GM12878 (cell line): ENCODE measurements at regions of chr9 and their contacts with region 1.

Region 1: GRCh38 chr9:90838100-90838499 is 36.5 kb downstream of the SYK start:
- DNase-seq: no peak
- ATAC-seq: peak; percentile 48
- H3K4me3 ChIP-seq: no peak overlapping the region
- H3K27ac ChIP-seq: no peak overlapping the region
- H3K4me1 ChIP-seq: peaks cover 25% of the 10 kb centered on the region
- H3K27me3 ChIP-seq: no peaks in the 10 kb centered on the region
- CTCF ChIP-seq: peak in 2 of 3 experiments; percentile 8; a peak in 1 of 6 replicates
- EP300 ChIP-seq: no peak
- POLR2A ChIP-seq: no peak
- RAD21 ChIP-seq: peak; percentile 40; the same call in 1 of the 2 replicates

Region 2: GRCh38 chr9:90801583-90802289 is 36.4 kb before region 1 on chr9 and contains the start of gene SYK:
- CTCF ChIA-PET with region 1: no interaction called
- POLR2A ChIA-PET with region 1: no interaction called
- RAD21 ChIA-PET with region 1: interaction called, 3 read pairs
- SMC1A ChIA-PET with region 1: interaction called, 10 read pairs
- in situ Hi-C with region 1: no loop called
- intact Hi-C with region 1: loop called (anchors 5 kb)
- DNase-seq: no peak
- ATAC-seq: peak; percentile 72
- H3K4me3 ChIP-seq: peak within 1 kb of the TSS; percentile 81
- H3K27ac ChIP-seq: peak within 1 kb of the TSS; percentile 83
- H3K4me1 ChIP-seq: peaks cover 25% of the 10 kb centered on the region
- H3K27me3 ChIP-seq: no peaks in the 10 kb centered on the region
- CTCF ChIP-seq: no peak
- EP300 ChIP-seq: no peak
- POLR2A ChIP-seq: peak; percentile 66; the same call in 1 of the 2 replicates
- RAD21 ChIP-seq: no peak
- polyA plus RNA-seq, gene SYK: 23.1 to 24.8 TPM

Region 3: DNA sequence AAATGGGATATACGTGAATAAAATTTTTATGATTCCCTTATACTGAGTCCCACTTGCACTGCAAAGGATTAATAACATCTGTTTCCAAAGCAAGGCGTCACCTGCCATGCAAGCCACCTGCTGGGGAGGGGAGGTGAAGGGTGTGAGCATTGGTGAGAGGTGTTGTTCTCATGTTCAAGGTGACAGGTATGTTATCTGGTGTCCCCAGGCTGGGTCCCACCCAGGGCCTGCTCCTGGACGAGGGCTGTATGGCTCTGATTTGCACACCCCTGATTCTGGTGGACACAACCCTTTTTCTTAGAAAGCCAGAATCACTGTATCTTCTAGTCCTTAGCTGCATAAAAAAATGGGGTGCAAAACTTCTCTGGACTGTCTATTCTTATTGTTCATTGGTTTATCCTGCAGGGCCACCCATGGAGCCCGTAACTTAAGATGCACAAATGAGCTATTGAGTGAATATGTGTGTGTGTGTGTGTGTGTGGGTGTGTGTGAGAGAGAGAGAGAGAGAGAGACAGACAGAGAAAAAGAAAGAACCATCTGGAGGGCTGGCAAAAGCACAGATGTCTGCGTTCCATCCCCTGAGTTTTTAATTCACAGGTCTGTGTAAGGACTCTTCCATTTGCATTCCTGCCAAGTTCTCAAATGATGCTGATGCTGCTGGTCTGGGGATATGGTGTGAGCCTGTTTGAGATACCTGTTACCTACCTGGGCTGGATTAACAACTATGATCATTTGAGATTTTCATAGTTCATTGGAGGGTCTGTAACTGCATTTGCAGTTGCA is 17.3 kb after region 1 on chr9:
- CTCF ChIA-PET with region 1: no interaction called
- POLR2A ChIA-PET with region 1: no interaction called
- RAD21 ChIA-PET with region 1: no interaction called
- SMC1A ChIA-PET with region 1: no interaction called
- in situ Hi-C with region 1: no loop called
- intact Hi-C with region 1: no loop called
- DNase-seq: no peak
- ATAC-seq: no peak
- H3K4me3 ChIP-seq: no peak overlapping the region
- H3K27ac ChIP-seq: no peak overlapping the region
- H3K4me1 ChIP-seq: no peaks in the 10 kb centered on the region
- H3K27me3 ChIP-seq: no peaks in the 10 kb centered on the region
- CTCF ChIP-seq: no peak
- EP300 ChIP-seq: no peak
- POLR2A ChIP-seq: no peak
- RAD21 ChIP-seq: no peak

Region 4: DNA sequence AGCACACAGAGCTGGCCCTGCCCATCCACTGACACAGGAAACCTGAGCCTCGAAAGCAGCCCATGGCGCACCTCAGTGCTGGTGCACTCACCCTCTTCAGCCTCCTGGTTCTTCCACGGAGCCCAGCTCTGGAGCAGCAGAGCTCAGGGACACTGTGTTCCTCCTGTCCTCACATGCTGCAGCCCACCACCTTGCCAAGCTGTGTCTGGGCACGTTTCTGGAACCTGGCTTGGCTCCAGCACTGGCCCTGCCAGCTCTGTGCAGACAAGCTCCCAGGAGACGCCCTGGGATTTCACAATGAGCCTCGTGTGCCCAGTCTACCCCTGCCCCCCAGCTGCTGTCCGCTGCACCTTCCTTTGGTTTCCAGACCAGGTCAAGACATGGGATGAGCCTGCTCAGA is 83.0 kb after region 1 on chr9:
- CTCF ChIA-PET with region 1: no interaction called
- POLR2A ChIA-PET with region 1: no interaction called
- RAD21 ChIA-PET with region 1: no interaction called
- SMC1A ChIA-PET with region 1: no interaction called
- in situ Hi-C with region 1: no loop called
- intact Hi-C with region 1: no loop called
- DNase-seq: no peak
- ATAC-seq: no peak
- H3K4me3 ChIP-seq: no peak overlapping the region
- H3K27ac ChIP-seq: no peak overlapping the region
- H3K4me1 ChIP-seq: peaks cover 17% of the 10 kb centered on the region
- H3K27me3 ChIP-seq: no peaks in the 10 kb centered on the region; a peak in 2 of 4 replicates
- CTCF ChIP-seq: no peak
- EP300 ChIP-seq: no peak
- POLR2A ChIP-seq: no peak
- RAD21 ChIP-seq: no peak